Lower leg skin (tissue), 4 donors: ENCODE measurements at regions of chr16 and their contacts with region 1.

Region 1: DNA sequence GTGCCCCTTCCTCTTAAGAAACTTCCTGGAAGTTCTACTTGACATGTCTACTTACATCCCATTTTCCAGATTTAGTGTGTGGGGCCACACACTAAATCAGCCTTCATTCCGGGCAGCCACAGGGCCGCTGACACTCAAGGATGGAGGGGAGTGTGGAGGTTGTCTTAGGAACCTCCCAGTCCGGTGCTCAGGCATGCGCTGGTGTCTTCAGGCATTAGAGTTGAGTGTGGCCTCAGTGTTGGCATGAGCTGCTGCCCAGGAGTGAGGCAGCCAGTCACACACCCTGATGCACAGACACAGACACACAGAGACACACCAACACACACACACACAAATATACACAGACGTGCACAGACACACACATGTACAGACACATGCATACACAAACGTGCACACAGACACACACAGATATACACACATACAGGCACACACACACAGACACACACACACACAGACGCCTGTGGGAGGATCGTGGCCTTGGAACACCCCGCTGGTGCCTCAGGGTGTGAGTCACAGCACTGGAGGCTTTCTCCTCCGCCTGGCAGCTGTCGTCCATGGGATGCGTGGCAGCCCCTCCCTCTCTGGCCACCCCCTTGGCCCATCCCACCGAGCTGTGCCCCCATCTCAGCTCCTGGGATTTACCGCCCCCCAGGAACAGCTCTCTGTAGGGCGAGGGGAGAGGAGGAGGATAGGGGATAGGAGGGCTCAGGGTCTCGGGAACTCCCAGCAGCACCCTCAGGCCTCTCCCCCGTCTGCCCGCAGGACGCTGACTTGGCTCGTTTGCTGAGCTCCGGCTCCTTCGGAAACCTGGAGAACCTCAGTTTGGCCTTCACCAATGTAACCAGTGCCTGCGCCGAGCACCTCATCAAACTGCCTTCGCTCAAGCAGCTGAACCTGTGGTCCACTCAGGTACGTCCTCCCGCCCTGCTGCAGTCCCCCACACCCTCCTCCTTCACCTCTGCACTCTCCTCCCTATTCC is 75.6 kb upstream of the PLCG2 start:
- DNase-seq: no peak
- H3K4me3 ChIP-seq: no peak overlapping the region
- CTCF ChIP-seq: no peak
- POLR2A ChIP-seq: no peak

Region 2: DNA sequence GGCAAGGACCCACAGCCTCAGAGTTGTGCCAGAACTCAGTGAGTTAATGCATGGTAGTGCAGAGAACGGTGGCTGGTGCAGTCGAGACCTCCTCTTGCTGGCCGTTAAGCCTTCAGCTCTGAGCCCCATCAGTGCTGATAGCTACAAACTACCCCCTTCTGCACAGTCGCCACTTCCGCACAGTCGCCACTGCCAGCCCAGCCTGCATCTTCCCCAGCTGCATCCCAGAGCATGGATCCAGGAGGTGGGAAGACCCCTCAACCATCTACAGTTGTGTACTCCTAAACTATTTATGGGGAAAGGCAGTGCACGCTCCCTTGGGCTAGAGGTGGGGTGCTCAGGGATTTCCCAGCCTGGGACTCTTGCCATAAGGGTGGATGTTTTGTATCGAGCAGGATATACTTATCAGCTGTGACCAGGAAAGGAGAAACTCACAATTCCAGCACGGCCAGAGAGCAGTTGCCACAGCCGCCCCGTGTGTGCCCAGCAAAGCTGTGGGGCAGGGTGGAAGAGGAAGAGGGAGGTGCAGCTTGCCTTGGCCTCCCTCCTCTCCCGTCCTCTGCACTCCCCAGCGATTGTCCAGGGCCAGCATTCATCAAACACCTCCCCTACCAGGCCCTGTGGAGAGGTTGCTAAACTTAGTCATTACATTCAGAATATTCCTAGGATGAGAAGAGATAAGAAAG is 308.4 kb before region 1 on chr16:
- intact Hi-C with region 1: loop called (anchors 10 kb)
- DNase-seq: peak in 1 of 2 donors; percentile 75
- H3K4me3 ChIP-seq: no peak overlapping the region
- CTCF ChIP-seq: no peak
- POLR2A ChIP-seq: no peak